ENCODE measurements at regions of chr12 and their contacts with region 1.

Region 1: GRCh38 chr12:66823857-66824570 is 145.1 kb upstream of the GRIP1 start:
- DNase-seq: no peak
- H3K4me3 ChIP-seq: no peak overlapping the region
- H3K27ac ChIP-seq: no peak overlapping the region
- H3K27me3 ChIP-seq: no peaks in the 10 kb centered on the region
- CTCF ChIP-seq: no peak

Region 2: DNA sequence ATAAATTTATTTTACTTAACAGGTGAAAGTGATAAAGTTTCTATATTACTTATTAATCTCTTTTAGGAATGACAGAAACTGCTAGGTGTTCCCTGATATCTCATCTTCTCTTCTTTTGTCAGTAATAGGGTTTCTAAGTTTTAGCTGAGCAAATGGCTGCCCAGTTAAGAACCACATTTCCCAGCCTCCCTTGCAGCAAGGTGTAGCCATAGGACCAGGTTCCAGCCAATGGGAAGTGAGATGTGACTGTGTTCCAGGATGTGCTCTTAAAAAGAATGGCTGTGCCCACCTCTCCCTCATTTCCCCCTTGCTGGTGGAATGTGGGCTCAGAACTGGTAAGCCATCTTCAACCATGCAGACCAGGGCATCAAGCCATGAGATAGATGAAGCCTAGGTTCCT is 356.1 kb before region 1 on chr12:
- CTCF ChIA-PET with region 1: interaction called, 12 read pairs
- POLR2A ChIA-PET with region 1: no interaction called
- DNase-seq: no peak
- H3K4me3 ChIP-seq: no peak overlapping the region
- H3K27ac ChIP-seq: no peak overlapping the region
- H3K27me3 ChIP-seq: no peaks in the 10 kb centered on the region
- CTCF ChIP-seq: no peak

Measured in AG04450 (cell line).